ENCODE measurements at regions of chr1 and their contacts with region 1.

Region 1: DNA sequence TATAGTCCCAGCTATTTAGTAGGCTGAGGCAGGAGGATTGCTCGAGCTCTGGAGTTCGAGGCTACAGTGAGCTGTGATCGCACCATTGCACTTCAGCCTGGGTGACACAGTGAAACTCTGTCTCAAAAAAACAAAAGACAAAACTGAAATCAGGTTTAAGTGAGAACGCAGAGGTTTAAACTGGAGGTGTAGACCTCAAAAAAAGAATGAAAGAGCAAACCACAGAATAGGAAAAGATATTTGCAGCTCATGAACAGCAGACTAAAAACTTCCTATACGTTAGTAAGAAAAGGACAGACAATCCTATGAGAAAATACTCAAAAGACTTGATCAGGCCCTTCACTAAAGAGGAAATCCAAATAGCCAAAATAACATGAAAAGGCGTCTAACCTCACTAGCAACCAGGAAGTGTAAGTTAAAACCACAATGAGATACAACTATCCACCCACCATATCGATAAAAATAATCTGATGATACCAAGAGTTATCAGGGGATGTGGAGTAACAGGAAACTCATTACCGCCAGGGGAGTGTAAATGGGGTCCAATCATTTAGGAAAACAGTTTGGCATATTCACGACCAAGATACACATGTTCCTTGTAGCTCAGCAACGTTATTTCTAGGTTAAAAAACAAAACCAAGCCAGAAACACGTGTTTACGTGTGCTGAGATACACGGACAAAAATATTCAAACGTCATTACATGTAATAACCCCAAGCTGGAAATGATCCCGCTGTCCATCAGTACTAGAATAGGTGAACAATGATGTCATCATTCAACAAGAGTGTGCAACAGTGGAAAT is 9.8 kb downstream of the TNFRSF9 start:
- DNase-seq: no peak
- H3K4me3 Mint-ChIP-seq: peak overlapping the region; percentile 14
- H3K27ac Mint-ChIP-seq: peak overlapping the region; percentile 81
- H3K4me1 Mint-ChIP-seq: peaks cover 53% of the 10 kb centered on the region
- H3K27me3 Mint-ChIP-seq: no peaks in the 10 kb centered on the region

Region 2: DNA sequence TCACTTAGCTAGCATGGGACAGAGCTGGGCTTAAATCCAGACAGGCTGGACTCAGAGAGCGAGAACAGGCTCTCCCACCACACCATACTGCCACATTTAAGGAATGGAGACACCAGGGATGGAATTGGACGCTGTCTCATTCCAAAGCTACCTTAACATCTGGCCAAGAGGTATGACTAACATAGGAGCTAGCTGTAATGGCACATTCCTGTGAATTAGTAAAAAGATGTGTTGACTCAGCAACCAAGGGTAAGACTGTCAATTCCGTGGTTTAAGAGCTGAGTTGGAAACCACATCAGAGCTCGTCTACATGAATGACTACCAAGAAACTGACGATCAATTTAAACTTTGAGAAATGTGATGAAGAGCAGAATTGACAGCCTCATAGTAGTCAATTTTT is 18.1 kb after region 1 on chr1:
- intact Hi-C with region 1: loop called (anchors 2 kb)
- DNase-seq: peak; percentile 29
- H3K4me3 Mint-ChIP-seq: peak overlapping the region; percentile 27
- H3K27ac Mint-ChIP-seq: peak overlapping the region; percentile 71
- H3K4me1 Mint-ChIP-seq: peaks cover 41% of the 10 kb centered on the region
- H3K27me3 Mint-ChIP-seq: no peaks in the 10 kb centered on the region

Region 3: GRCh38 chr1:8780405-8780804 is 849.6 kb after region 1 on chr1:
- intact Hi-C with region 1: no loop called
- DNase-seq: no peak
- H3K4me3 Mint-ChIP-seq: no peak overlapping the region
- H3K27ac Mint-ChIP-seq: no peak overlapping the region
- H3K4me1 Mint-ChIP-seq: peaks cover 14% of the 10 kb centered on the region
- H3K27me3 Mint-ChIP-seq: no peaks in the 10 kb centered on the region